Lower leg skin (tissue), 4 donors: ENCODE measurements at regions of chr3 and their contacts with region 1.

Region 1: DNA sequence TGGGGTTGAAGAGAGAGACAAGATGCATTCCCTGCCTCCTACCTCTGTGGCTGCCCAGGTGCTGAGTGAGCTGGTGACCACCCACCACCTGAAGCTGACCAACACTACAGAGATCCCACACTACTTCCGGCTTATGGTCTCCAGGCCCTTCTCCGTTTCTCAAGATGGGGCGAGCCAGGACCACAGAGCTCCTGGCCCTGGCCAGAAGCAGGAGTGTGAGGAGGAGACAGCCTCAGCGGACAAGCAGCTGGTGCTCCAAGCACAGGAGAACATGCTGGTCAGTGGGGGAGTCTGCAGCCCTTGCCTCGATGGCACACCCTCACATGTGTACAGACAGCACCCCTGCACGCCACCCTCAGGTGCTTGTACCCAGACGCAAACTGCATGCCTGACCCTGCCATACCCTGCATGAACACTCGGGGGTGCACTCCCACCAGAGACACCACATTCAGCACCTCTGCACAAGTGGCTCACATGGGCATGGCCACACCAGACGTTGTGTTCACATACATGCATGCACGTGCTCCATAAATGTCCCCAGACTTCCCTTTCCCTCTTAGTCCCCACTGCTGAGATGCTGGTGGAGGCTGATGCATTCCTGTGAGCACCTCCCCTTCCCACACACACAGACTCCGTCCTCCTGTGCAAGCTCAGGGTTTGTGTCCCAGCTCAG is 19.0 kb downstream of the ACAA1 start:
- DNase-seq: peak; percentile 58 to 92
- H3K4me3 ChIP-seq: no peak overlapping the region
- CTCF ChIP-seq: peak in 1 of 3 donors; percentile 58
- POLR2A ChIP-seq: no peak

Region 2: GRCh38 chr3:38004415-38005076 is 113.3 kb before region 1 on chr3:
- intact Hi-C with region 1: loop called (anchors 10 kb)
- DNase-seq: peak; percentile 78 to 93
- H3K4me3 ChIP-seq: no peak overlapping the region
- CTCF ChIP-seq: no peak
- POLR2A ChIP-seq: no peak

Region 3: GRCh38 chr3:38164966-38165680 is 47.2 kb after region 1 on chr3 and contains the start of gene OXSR1:
- intact Hi-C with region 1: loop called (anchors 2 kb)
- DNase-seq: peak; percentile 100
- H3K4me3 ChIP-seq: peak within 1 kb of the TSS; percentile 94
- CTCF ChIP-seq: peak in 1 of 3 donors; percentile 6
- POLR2A ChIP-seq: peak in 1 of 2 donors; percentile 39
- total RNA-seq, gene OXSR1: 23.4 to 36.1 (median 31.6) TPM

Region 4: GRCh38 chr3:38468782-38469181 is 350.9 kb after region 1 on chr3:
- intact Hi-C with region 1: loop called (anchors 5 kb)
- DNase-seq: no peak
- H3K4me3 ChIP-seq: no peak overlapping the region
- CTCF ChIP-seq: no peak
- POLR2A ChIP-seq: no peak

Region 5: DNA sequence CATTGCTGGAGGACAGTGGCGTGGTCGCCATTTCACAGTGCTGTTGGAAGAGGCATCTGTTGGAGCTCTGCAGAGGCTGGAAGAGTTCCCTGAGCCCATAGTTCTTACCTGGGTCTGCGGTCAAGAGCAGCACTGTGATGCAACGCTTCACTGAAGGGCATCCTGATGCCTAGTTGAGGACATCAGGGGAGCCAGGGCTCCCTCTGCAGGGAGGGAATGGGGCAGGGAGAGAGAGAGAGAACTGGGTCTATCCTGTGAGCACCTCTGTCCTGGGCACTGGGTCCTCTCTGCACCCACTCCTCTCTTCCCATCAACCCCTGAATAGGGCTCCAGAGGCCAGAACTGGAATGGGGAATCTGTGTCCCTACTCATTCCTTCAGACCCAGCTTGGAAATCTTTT is 1325.6 kb after region 1 on chr3:
- intact Hi-C with region 1: no loop called
- DNase-seq: no peak
- H3K4me3 ChIP-seq: no peak overlapping the region
- CTCF ChIP-seq: no peak
- POLR2A ChIP-seq: no peak